ENCODE measurements at regions of chr6 and their contacts with region 1.

Region 1: GRCh38 chr6:81752138-81752920 is at the start of gene TENT5A:
- DNase-seq: peak; percentile 82 to 96
- H3K4me3 ChIP-seq: peak within 1 kb of the TSS; percentile 82 to 93
- H3K27ac ChIP-seq: peak within 1 kb of the TSS; percentile 90 to 97
- H3K4me1 ChIP-seq: peaks cover 0 to 10% of the 10 kb centered on the region in 2 donors
- H3K27me3 ChIP-seq: no peaks in the 10 kb centered on the region
- CTCF ChIP-seq: peak in 1 of 3 experiments; percentile 11
- total RNA-seq, gene TENT5A: 9.6 TPM

Region 2: GRCh38 chr6:81172056-81172740 is 580.1 kb before region 1 on chr6:
- intact Hi-C with region 1: loop called (anchors 10 kb)
- DNase-seq: peak in 1 of 2 donors; percentile 81
- H3K4me3 ChIP-seq: no peak overlapping the region
- H3K27ac ChIP-seq: peak overlapping the region; percentile 72 to 78
- H3K4me1 ChIP-seq: peaks cover 0 to 29% of the 10 kb centered on the region in 2 donors
- H3K27me3 ChIP-seq: no peaks in the 10 kb centered on the region
- CTCF ChIP-seq: no peak

Region 3: DNA sequence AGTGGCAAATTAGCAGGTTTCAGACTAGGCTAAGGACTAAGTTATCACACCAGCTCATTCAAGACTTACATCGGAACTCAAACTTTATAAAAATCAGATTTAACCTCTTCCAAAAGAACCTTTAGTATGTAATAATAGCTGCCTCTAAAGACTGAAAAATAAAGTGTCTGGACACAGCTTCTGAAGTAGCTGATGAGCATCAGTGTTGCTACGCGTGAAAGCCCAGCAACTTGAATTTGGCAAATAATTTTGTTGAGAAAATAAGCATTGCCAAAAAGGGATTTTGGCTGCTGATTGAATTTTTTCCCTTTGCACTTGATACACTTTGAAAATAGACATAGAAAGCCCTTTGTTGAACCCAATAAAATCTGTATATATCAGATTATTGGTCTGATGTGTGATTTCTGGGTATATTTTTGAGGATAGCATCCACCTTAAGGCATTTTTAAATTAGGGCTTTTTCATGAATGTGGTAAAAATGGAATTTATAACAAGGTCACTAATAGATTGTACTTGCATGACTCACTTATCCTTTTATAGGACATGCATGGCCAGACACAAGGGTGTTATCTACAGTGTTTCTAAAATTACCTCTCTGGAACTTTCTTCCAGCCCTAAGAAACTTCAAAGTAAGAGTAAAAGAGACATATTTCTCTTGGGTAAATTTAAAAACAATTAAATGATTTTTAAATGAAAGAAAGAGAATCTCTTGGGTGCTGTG is 350.2 kb before region 1 on chr6:
- intact Hi-C with region 1: loop called (anchors 5 kb)
- DNase-seq: no peak
- H3K4me3 ChIP-seq: peak overlapping the region in 1 of 2 donors; percentile 6
- H3K27ac ChIP-seq: peak overlapping the region; percentile 76 to 79
- H3K4me1 ChIP-seq: peaks cover 0 to 15% of the 10 kb centered on the region in 2 donors
- H3K27me3 ChIP-seq: no peaks in the 10 kb centered on the region
- CTCF ChIP-seq: no peak

Region 4: DNA sequence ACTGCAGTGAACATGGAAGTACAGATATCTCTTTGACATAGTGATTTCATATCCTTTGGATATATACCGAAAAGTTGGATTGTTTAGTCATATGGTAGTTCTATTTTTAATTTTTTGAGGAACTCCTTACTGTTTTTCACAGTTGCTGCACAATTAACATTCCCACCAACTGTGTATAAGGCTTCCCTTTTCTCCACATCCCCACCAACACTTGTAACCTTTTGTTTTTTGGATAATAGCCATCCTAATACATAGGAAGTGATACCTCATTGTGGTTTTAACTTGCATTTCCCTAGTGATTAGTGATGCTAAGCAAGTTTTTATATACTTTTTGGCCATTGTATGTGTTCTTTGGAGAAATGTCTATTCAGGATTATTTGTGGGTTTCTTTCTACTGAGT is 45.3 kb after region 1 on chr6:
- intact Hi-C with region 1: no loop called
- DNase-seq: no peak
- H3K4me3 ChIP-seq: no peak overlapping the region
- H3K27ac ChIP-seq: no peak overlapping the region
- H3K4me1 ChIP-seq: no peaks in the 10 kb centered on the region
- H3K27me3 ChIP-seq: no peaks in the 10 kb centered on the region
- CTCF ChIP-seq: no peak

Region 5: DNA sequence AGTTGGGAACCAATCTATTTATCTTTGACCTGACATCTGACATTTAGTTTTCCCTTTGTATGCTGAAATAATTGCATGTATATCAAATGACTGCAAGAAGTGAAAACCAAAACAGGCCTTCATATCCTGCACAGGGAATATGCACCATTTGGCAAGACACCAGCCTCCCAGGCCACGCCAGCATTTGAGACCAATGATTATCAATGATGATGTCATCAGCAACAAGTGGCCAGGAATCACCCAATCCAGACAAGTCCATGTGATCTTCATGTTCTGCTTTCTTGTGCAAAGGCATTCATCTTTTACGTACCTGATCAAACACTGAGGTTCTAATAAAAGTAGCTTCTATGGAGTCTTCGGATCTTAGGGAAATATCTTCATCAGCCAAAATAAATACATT is 107.6 kb after region 1 on chr6:
- intact Hi-C with region 1: loop called (anchors 5 kb)
- DNase-seq: peak in 1 of 2 donors; percentile 80
- H3K4me3 ChIP-seq: no peak overlapping the region
- H3K27ac ChIP-seq: peak overlapping the region; percentile 70 to 76
- H3K4me1 ChIP-seq: peaks cover 8 to 54% of the 10 kb centered on the region in 2 donors
- H3K27me3 ChIP-seq: no peaks in the 10 kb centered on the region
- CTCF ChIP-seq: no peak

Region 6: DNA sequence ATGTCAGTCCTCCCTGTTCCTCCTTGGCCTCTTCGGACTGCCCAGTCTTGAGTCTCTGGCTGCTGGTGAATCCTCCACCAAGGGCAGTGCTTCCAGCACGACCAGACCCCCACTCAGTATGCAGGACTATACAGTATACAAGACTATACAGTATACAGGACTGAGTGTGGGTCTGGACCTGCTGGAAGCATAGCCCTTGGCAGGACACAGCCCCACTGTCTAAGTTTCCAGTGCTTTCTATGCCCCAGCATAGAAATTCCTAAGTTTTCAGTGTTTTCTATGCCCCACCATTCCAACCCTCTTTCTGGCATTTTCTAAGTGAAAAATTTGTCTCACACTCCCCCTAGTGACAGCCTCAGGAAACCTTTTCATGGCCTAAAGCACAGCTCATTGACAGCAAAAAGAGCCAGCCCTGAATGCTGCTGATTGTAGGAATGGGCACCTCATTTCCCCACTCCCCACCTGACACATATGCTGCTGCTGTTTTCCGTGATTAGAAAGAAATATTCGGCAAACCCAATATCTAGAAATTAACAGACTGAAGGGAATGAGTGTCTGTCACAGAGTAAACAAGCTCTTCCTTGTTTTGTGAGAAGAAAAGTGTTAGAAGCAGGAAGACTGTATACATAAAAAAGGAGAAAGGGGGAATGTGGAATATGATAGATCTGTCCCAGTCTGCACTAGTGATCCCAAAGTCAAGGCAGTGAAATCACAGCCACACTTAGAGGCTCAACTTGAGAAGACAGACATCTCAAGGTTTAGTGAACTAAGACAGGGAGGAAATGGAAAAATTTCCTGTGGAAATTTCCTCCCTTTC is 288.3 kb after region 1 on chr6:
- intact Hi-C with region 1: loop called (anchors 2 kb)
- DNase-seq: peak in 1 of 2 donors; percentile 73
- H3K4me3 ChIP-seq: no peak overlapping the region
- H3K27ac ChIP-seq: no peak overlapping the region
- H3K4me1 ChIP-seq: peaks cover 0 to 4% of the 10 kb centered on the region in 2 donors
- H3K27me3 ChIP-seq: no peaks in the 10 kb centered on the region
- CTCF ChIP-seq: peak; percentile 46 to 80 (median 74)

Region 7: GRCh38 chr6:82247634-82248232 is 495.4 kb after region 1 on chr6 and contains the start of gene IBTK:
- intact Hi-C with region 1: loop called (anchors 5 kb)
- DNase-seq: peak; percentile 72 to 97
- H3K4me3 ChIP-seq: peak within 1 kb of the TSS; percentile 92
- H3K27ac ChIP-seq: peak within 1 kb of the TSS; percentile 96
- H3K4me1 ChIP-seq: peaks cover 0 to 9% of the 10 kb centered on the region in 2 donors
- H3K27me3 ChIP-seq: no peaks in the 10 kb centered on the region
- CTCF ChIP-seq: no peak
- total RNA-seq, gene IBTK: 8.8 TPM

Measured in ascending aorta (tissue), 2 donors.